ENCODE measurements at regions of chr11 and their contacts with region 1.

Region 1: DNA sequence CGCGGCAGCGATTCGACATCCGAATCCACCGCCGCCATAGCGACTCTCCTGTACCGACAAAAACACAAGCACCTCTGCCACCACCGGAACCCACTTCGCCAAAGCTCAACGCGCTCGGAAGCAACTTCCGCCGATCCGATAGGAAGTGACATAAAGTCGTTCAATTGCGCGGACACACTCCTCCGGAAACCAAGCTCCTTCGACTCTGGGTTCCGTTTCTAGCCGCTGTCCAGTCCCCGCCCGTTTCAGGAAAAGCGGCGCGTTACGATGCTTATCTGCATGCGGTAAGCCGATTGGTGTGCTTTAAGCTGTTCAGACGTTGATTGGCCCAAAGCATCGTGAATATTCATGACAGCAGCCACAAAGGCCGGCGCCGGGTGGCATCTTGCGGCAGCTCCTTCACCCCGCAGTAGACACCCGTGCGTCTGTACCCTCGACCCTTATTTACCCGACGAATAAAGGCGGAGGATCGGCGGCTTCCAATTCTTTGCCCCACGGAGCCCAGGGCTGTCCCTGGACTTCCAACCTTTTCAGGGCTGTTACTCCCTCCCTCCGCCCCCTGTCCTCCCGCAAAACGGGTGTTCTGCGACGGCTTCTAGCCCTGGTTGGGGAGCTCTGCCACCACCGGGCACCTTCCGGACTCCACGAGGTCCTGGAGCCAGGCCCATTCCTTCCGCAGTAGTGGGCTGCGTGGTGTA is at the start of gene TUT1:
- DNase-seq: peak; percentile 93 to 97
- H3K4me3 ChIP-seq: peak within 1 kb of the TSS; percentile 89 to 97 (median 94)
- H3K27ac ChIP-seq: peak within 1 kb of the TSS; percentile 72
- H3K4me1 ChIP-seq: peaks cover 0 to 3% (median under 1%) of the 10 kb centered on the region in 4 experiments; a peak in 5 of 7 replicates
- H3K27me3 ChIP-seq: no peaks in the 10 kb centered on the region
- CTCF ChIP-seq: no peak
- EP300 ChIP-seq: peak in 1 of 2 experiments; percentile 71; a peak in 1 of 3 replicates
- POLR2A ChIP-seq: peak; percentile 91 to 93
- RAD21 ChIP-seq: no peak; a peak in 1 of 4 replicates
- total RNA-seq, gene TUT1: 24.6 and 31.5 TPM in 2 replicates

Region 2: DNA sequence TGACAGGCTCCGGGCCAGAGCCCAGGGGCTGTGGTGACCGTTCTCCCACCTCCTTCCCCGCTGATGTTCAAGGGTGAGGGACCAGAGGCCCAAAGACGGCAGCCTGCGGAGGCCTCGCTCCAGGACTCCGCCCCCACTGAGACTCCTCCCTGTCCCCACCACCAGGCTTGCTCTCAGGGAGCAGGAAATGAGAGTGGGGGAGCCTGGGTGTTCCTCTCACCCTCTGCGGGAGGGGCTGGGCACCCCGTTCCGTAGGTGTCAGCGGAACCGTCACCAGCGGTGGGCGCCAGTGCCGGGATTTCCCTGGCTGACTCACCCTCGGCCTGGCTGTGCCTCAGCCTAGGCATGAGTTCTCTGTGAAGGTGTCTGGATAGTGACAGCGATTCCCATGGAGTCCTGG is 895.7 kb before region 1 on chr11:
- CTCF ChIA-PET with region 1: no interaction called
- POLR2A ChIA-PET with region 1: no interaction called
- DNase-seq: peak in 1 of 2 experiments; percentile 63
- H3K4me3 ChIP-seq: no peak overlapping the region
- H3K27ac ChIP-seq: no peak overlapping the region
- H3K4me1 ChIP-seq: peaks cover 9 to 38% (median 29%) of the 10 kb centered on the region in 4 experiments
- H3K27me3 ChIP-seq: peaks cover 0 to 3% (median 1%) of the 10 kb centered on the region in 4 experiments; a peak in 1 of 7 replicates
- CTCF ChIP-seq: 0 out of 4 replicates have a peak, but pooled peaks of 1 of the 3 experiments have one; percentile 17
- EP300 ChIP-seq: no peak
- POLR2A ChIP-seq: no peak
- RAD21 ChIP-seq: peak in 1 of 2 experiments; percentile 17; a peak in 1 of 4 replicates

Region 3: DNA sequence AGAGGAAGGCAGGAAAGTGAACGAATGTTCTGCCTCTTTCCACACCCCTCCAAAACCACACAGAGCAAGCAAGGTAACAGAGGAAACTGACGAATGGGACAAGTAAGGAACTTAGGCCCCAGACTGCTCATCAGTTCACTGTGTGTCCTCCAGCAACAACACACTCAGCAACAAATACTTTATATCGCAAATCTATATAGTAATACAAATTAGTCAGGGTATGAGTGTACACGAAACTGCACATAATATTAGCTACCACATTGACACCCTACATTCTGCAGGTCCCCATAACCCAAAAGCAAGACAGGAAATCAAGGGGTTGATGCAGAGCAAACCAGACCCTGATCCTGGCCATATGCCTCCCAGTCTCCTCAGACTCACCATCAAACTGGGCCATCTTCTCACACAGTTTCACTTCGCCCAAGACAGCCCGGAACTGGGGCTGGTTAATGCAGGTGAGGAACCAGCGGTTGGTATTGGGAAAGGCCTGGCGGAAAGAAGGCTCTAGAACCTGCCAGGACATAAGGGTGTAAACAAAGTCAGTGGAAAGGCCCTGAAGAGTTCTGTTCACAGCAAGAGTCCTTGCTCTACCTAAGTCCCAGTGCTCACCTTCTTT is 24.5 kb before region 1 on chr11:
- CTCF ChIA-PET with region 1: interaction called, 9 read pairs
- POLR2A ChIA-PET with region 1: interaction called, 167 read pairs
- DNase-seq: no peak
- H3K4me3 ChIP-seq: no peak overlapping the region
- H3K27ac ChIP-seq: no peak overlapping the region
- H3K4me1 ChIP-seq: peaks cover 2 to 6% (median 2%) of the 10 kb centered on the region in 4 experiments; a peak in 3 of 7 replicates
- H3K27me3 ChIP-seq: no peaks in the 10 kb centered on the region
- CTCF ChIP-seq: no peak
- EP300 ChIP-seq: no peak
- POLR2A ChIP-seq: no peak
- RAD21 ChIP-seq: no peak

Region 4: DNA sequence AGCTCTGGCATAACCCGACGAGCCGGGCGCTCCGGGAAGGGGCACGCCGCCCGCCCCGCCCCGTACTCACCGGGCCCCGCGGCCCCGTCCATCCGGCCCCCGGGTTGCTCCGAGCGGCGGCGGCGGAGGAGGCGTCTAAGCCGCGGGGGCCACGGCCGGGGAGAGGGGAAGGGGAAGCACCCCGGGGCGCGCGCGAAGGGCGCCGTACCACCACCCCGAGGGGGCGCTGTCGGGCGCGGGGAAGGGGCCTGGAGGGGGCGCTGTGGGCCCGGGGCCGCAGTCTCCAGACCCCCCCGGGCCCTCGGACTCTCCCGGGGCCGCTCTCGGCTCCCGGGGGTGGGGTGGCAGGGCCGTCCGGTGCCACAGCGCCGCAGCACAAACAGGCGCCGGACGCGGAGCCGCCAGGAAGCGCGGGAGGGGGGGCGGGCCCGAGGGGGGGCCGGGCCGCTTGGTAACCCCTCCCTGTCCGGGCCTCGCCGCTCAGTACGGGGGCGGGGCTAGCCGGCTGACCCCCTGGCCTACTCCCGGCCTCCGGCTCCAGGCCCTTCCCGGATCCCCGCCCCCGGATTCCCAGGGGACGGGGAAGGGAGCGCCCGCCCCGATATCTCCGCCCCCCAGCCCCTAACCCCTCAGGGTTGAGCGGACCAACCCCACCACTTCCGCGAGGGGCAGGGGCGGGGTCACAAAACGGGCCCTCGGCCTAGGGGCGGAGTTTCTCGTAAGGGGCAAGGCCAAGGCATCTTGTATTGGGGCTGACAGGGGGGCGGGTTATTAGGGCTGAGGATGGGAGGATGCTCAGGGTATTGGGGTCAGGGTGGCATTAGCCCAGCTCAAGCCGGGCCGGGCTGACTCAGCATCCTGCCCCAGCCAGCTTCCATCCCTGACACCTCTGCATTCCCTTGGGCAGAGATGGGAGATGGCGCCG is 21.0 kb after region 1 on chr11 and contains the starts of genes EML3 and ROM1:
- CTCF ChIA-PET with region 1: interaction called, 97 read pairs
- POLR2A ChIA-PET with region 1: interaction called, 235 read pairs
- DNase-seq: peak; percentile 85 to 94
- H3K4me3 ChIP-seq: peak within 1 kb of the TSS; percentile 48 to 73 (median 58)
- H3K27ac ChIP-seq: no peak within 1 kb of the TSS
- H3K4me1 ChIP-seq: peaks cover 0 to 19% (median 12%) of the 10 kb centered on the region in 4 experiments; a peak in 6 of 7 replicates
- H3K27me3 ChIP-seq: peaks cover 0 to 3% (median 2%) of the 10 kb centered on the region in 4 experiments; a peak in 1 of 7 replicates
- CTCF ChIP-seq: peak; percentile 65 to 100 (median 87)
- EP300 ChIP-seq: no peak
- POLR2A ChIP-seq: no peak; a peak in 1 of 3 replicates
- RAD21 ChIP-seq: peak; percentile 23 to 47; a peak in 3 of 4 replicates
- total RNA-seq, gene EML3: 29.9 and 31.2 TPM in 2 replicates
- total RNA-seq, gene ROM1: 0.55 and 2.2 TPM in 2 replicates

Region 5: DNA sequence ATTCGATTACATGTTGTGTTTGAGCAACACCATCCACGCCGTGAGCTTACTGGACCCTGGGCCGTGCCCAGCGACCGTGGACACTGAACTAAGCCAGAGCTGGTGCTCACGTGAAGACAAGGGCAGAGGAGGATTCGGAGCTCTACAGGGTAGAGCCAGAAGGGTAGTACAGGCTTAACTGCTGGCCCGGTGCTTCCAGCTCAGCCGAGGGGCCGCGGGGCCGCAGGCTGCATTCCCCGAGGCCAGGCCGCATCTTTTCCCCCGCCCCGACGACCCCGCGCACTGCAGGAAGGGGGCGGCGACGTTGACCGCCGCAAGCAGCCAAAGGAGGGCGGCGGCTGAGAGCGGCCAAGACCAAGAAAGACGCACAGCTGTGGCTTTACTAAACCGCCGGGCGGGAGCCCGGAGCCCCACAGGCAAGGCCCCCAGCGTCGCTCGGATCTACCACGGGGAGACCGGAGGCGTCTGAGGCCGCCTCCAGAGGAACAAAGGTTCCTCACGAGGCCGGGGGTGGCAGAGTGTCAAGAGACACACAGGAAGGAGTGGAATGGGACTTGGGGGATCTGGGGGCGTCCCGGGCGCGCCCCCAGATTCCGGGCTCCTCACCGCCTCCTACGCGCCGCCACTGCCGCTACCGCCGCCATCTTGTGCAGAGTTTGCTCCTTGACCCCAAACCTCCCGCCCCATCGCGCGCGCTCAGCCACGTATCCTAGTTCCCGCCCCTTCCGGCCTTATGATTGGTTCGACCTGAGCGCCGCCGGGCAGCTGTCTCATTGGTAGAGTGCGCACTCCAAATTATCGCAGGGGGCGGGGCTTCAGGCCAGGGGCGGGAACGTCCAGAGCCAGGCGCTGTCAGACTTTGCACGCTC is 54.6 kb after region 1 on chr11 and contains the start of gene GANAB:
- CTCF ChIA-PET with region 1: interaction called, 12 read pairs
- POLR2A ChIA-PET with region 1: interaction called, 52 read pairs
- DNase-seq: peak; percentile 87 to 96
- H3K4me3 ChIP-seq: peak within 1 kb of the TSS; percentile 71 to 99 (median 90)
- H3K27ac ChIP-seq: peak within 1 kb of the TSS; percentile 90
- H3K4me1 ChIP-seq: no peaks in the 10 kb centered on the region; a peak in 2 of 7 replicates
- H3K27me3 ChIP-seq: no peaks in the 10 kb centered on the region
- CTCF ChIP-seq: no peak
- EP300 ChIP-seq: no peak
- POLR2A ChIP-seq: peak; percentile 82 to 99
- RAD21 ChIP-seq: no peak
- total RNA-seq, gene GANAB: 326 and 330 TPM in 2 replicates

Region 6: DNA sequence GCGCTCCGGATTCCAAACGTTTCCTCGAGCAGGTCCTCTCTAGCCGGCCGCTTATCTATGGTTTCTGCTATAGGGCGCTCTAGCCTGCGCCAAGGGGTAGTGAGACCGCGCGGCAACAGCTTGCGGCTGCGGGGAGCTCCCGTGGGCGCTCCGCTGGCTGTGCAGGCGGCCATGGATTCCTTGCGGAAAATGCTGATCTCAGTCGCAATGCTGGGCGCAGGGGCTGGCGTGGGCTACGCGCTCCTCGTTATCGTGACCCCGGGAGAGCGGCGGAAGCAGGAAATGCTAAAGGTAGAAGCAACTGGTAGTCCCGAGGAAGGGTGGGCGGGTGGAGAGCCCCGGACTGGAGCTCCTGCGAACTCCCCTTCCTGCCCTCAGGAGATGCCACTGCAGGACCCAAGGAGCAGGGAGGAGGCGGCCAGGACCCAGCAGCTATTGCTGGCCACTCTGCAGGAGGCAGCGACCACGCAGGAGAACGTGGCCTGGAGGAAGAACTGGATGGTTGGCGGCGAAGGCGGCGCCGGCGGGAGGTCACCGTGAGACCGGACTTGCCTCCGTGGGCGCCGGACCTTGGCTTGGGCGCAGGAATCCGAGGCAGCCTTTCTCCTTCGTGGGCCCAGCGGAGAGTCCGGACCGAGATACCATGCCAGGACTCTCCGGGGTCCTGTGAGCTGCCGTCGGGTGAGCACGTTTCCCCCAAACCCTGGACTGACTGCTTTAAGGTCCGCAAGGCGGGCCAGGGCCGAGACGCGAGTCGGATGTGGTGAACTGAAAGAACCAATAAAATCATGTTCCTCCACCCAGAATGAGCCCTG is 80.2 kb after region 1 on chr11 and contains the starts of genes LBHD1 and UQCC3:
- CTCF ChIA-PET with region 1: interaction called, 4 read pairs
- POLR2A ChIA-PET with region 1: interaction called, 77 read pairs
- DNase-seq: peak; percentile 41 to 88
- H3K4me3 ChIP-seq: peak within 1 kb of the TSS; percentile 88 to 97 (median 92)
- H3K27ac ChIP-seq: peak within 1 kb of the TSS; percentile 63
- H3K4me1 ChIP-seq: peaks cover 2 to 8% (median 2%) of the 10 kb centered on the region in 4 experiments; a peak in 5 of 7 replicates
- H3K27me3 ChIP-seq: no peaks in the 10 kb centered on the region
- CTCF ChIP-seq: no peak
- EP300 ChIP-seq: no peak
- POLR2A ChIP-seq: peak in 1 of 2 experiments; percentile 71; a peak in 2 of 3 replicates
- RAD21 ChIP-seq: peak in 1 of 2 experiments; percentile 1; a peak in 1 of 4 replicates
- total RNA-seq, gene LBHD1: 3.6 and 5.2 TPM in 2 replicates
- total RNA-seq, gene UQCC3: 14.2 and 15.2 TPM in 2 replicates

Region 7: DNA sequence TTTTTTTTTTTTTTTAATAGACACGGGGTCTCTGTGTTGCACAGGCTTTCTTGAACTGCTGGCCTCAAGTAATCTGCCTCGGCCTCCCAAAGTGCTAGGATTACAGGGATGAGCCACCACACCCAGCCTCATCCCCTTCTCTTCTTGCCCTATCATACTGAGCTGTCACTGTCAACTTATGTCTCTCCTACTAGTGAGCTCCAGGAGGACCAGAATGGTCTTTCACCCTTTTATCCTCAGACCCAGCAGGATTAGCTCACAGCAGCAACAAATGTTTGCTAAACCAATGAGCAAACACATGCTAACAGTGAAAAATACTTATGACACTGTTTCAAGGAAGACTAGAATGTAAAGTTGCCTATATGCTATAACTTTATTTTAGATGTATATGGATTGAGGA is 220.1 kb after region 1 on chr11:
- CTCF ChIA-PET with region 1: no interaction called
- POLR2A ChIA-PET with region 1: no interaction called
- DNase-seq: no peak
- H3K4me3 ChIP-seq: no peak overlapping the region
- H3K27ac ChIP-seq: no peak overlapping the region
- H3K4me1 ChIP-seq: no peaks in the 10 kb centered on the region
- H3K27me3 ChIP-seq: no peaks in the 10 kb centered on the region
- CTCF ChIP-seq: no peak
- EP300 ChIP-seq: no peak
- POLR2A ChIP-seq: no peak
- RAD21 ChIP-seq: no peak

Region 8: DNA sequence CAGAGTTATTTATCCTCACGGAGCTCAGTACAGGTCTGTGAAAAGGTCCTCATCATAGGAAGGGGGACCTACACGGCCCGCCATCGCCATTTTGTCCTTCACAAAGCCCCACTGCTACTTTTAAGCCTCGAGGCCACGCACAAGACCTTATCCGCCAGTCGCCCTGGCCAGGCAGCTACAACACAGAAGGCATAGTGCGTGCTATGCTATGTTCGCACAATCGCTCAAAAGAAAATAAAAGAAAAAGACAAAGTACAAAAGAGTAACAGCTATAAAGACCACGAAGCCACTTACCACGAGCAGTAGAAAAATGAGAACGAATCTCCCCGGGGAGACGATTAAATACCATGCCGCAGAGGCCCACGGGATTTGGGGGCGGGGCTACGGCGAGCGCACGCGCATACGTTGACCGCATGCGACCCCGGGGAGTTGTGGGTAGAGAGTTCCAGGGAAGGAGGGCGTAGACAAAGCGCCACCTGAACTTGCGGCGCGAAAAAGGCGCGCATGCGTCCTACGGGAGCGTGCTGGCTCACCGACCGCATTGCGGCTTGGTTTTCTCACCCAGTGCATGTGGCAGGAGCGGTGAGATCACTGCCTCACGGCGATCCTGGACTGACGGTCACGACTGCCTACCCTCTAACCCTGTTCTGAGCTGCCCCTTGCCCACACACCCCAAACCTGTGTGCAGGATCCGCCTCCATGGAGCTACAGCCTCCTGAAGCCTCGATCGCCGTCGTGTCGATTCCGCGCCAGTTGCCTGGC is 264.2 kb after region 1 on chr11:
- CTCF ChIA-PET with region 1: no interaction called
- POLR2A ChIA-PET with region 1: interaction called, 13 read pairs
- DNase-seq: peak; percentile 98 to 99
- H3K4me3 ChIP-seq: peak overlapping the region; percentile 74 to 100 (median 90)
- H3K27ac ChIP-seq: peak overlapping the region; percentile 96
- H3K4me1 ChIP-seq: peaks cover 4 to 7% (median 7%) of the 10 kb centered on the region in 4 experiments; a peak in 4 of 7 replicates
- H3K27me3 ChIP-seq: no peaks in the 10 kb centered on the region
- CTCF ChIP-seq: no peak
- EP300 ChIP-seq: no peak
- POLR2A ChIP-seq: peak; percentile 98 to 99
- RAD21 ChIP-seq: no peak

Measured in H1 (cell line).